Heart left ventricle (tissue), 16 donors: ENCODE measurements at regions of chr9 and their contacts with region 1.

Region 1: DNA sequence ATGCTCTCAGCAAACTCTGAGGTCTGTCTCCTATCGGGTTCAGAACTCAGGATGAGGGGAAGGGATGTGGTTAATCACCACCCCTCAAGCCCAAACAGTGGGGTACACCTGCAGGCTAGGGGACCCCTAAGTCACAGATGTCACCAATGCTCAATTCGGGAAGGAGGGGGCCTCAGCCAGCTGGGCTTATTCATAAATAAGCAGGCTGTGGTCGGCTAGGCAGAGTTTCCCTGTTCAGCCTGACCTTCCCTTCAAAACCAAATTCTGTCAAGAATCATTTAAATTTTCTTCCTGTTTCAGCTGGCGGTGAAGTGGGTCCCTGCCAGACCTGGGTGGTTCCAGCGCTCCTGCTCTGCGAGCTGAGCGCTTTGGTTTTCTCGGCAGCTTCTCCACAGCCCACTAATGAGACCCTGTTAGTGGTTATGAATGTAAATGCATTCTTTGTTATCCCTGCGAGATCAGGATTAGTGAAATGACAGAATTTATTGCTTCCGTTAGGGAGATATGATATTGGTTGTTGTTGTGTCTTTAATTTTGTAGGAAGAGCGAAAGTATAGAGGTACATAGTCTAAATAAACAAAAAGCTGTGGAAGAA is 68.3 kb downstream of the AK8 start:
- DNase-seq: no peak
- ATAC-seq: no peak
- H3K4me3 ChIP-seq: no peak overlapping the region
- H3K27ac ChIP-seq: no peak overlapping the region
- H3K4me1 ChIP-seq: no peaks in the 10 kb centered on the region
- H3K27me3 ChIP-seq: no peaks in the 10 kb centered on the region
- CTCF ChIP-seq: no peak
- POLR2A ChIP-seq: no peak

Region 2: DNA sequence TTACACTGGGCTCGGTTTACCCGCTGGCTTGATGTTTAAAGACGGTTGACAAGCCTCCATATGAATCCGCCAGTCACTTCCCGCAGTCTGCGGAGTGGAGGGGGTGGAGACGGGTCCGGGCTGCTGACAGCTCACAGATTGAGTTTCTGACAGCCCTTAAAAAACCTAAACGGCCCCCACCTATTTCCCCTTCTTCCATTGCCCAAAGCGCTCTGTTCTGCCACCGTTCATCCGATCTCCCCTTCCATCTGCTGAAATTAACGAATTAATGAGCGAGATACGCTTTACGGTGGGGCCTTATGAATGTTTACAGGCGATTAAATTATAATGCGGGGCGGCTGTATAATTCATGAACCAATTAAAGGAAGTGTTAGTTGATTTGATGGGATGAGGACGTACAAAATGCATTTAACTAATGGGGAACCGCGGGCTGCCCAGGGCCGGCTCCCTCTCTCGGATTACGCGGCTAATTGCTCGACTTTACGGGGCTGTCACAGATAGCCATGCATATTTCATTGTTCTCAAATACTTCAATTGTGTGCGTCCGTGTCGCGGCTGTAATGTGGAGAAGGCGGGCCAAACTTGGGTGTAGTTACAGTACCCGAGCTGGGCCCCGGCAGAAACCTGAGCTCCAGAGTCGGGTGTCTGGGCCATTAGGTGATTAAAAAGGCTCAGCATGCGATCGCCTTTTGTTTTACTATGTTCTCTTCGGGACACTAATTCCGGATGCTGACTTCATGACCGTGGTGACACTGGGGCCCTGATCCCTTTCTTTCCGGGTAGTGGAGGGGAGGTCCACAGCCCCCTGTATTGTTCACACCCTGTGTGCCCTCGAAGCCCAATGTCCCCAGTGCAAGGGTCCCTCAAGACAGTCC is 64.7 kb before region 1 on chr9:
- intact Hi-C with region 1: no loop called
- DNase-seq: no peak
- ATAC-seq: peak in 1 of 4 donors; percentile 34
- H3K4me3 ChIP-seq: peak overlapping the region in 9 of 12 donors; percentile 17 to 47 (median 33)
- H3K27ac ChIP-seq: no peak overlapping the region
- H3K4me1 ChIP-seq: peaks cover 0 to 10% (median 0%) of the 10 kb centered on the region in 12 donors
- H3K27me3 ChIP-seq: peaks cover 9 to 46% (median 19%) of the 10 kb centered on the region in 9 donors
- CTCF ChIP-seq: no peak
- POLR2A ChIP-seq: no peak

Region 3: DNA sequence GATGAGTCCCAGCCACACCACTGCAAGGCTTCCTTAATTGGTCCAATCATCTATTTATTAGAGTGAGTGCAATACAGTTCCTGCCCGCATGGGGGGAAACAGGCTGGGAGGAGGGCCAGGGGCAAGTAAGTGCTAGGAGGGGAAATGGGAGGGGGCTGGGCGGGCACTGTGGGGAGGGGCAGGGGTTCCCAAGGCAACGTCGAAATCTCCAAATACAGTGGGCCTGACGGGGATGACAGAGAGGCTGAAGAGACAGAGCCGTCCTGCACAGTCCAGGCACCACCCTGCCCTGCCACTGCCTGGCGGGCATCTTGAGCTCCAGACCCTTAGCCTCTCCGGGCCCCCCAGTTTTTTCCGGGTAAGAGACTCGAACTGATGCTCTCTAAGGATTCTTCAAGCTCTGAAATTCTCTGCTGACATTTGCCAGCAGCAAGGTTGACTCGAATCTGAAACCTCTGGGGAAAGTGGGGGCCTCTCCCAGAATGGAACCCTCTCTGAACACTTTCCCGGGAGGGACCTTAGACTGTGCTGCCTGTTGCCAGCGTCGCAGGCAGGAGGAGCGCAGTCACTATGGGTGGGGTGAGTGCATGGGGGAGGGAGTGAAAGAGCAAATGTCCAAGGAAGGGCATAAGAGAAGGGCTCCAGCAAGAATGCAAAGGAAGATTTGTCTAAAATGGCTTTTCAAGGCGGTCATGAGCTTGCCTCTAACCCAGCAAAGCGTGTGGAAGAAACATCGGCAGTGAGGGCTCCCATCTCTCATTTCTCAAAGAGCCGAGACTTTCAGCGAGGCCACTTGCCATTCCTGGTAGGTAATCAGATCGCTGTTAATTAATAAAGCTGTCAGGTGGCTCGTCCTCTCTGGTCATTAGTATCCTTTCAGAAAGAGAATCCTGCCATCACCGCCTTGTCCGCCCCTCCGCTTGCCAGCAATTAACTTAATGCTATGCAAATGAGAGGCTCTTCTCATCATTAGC is 40.6 kb before region 1 on chr9:
- intact Hi-C with region 1: no loop called
- DNase-seq: peak; percentile 39 to 76 (median 51)
- ATAC-seq: peak; percentile 57 to 86 (median 84)
- H3K4me3 ChIP-seq: peak overlapping the region; percentile 49 to 95 (median 72)
- H3K27ac ChIP-seq: peak overlapping the region in 11 of 12 donors; percentile 42 to 88 (median 58)
- H3K4me1 ChIP-seq: peaks cover 0 to 20% (median 9%) of the 10 kb centered on the region in 12 donors
- H3K27me3 ChIP-seq: no peaks in the 10 kb centered on the region
- CTCF ChIP-seq: peak in 10 of 12 donors; percentile 18 to 49 (median 39)
- POLR2A ChIP-seq: no peak

Region 4: GRCh38 chr9:132894356-132895240 is 84.8 kb after region 1 on chr9:
- intact Hi-C with region 1: loop called in 1 of 10 experiments (anchors 10 kb)
- DNase-seq: no peak
- ATAC-seq: peak in 1 of 4 donors; percentile 44
- H3K4me3 ChIP-seq: no peak overlapping the region
- H3K27ac ChIP-seq: no peak overlapping the region
- H3K4me1 ChIP-seq: peaks cover 0 to 10% (median 4%) of the 10 kb centered on the region in 12 donors
- H3K27me3 ChIP-seq: no peaks in the 10 kb centered on the region
- CTCF ChIP-seq: no peak
- POLR2A ChIP-seq: no peak

Region 5: GRCh38 chr9:132937463-132937901 is 127.7 kb after region 1 on chr9:
- intact Hi-C with region 1: no loop called
- DNase-seq: no peak
- ATAC-seq: no peak
- H3K4me3 ChIP-seq: no peak overlapping the region
- H3K27ac ChIP-seq: no peak overlapping the region
- H3K4me1 ChIP-seq: peaks cover 0 to 42% (median 21%) of the 10 kb centered on the region in 12 donors
- H3K27me3 ChIP-seq: no peaks in the 10 kb centered on the region
- CTCF ChIP-seq: no peak
- POLR2A ChIP-seq: no peak

Region 6: DNA sequence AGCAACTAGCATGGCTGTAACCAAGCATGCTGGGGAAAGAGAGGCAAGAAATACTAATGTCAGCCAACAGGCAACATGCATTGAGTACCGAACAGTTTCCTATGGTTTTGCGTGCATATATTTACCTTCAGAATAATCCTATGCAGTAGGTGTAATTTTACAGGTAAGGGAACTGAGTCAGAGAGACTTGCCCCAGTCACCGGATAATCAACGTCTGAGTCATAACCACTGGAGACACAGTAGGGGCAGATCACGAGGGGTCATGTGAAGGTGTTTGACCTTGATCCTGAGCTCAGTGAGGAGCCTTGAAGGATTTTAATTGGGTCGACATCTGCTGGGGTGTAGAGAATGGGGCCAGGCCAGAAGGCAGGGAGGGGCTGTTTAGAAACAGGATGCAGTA is 148.0 kb after region 1 on chr9:
- intact Hi-C with region 1: no loop called
- DNase-seq: no peak
- ATAC-seq: no peak
- H3K4me3 ChIP-seq: no peak overlapping the region
- H3K27ac ChIP-seq: no peak overlapping the region
- H3K4me1 ChIP-seq: peaks cover 0 to 13% (median 0%) of the 10 kb centered on the region in 12 donors
- H3K27me3 ChIP-seq: no peaks in the 10 kb centered on the region
- CTCF ChIP-seq: no peak
- POLR2A ChIP-seq: no peak